IMR-90 (cell line): ENCODE measurements at regions of chr16 and their contacts with region 1.

Region 1: GRCh38 chr16:59090541-59090940 is 356.4 kb upstream of the GOT2 start:
- DNase-seq: no peak
- ATAC-seq: no peak
- H3K4me3 ChIP-seq: no peak overlapping the region
- H3K27ac ChIP-seq: no peak overlapping the region
- H3K4me1 ChIP-seq: no peaks in the 10 kb centered on the region
- H3K27me3 ChIP-seq: no peaks in the 10 kb centered on the region
- CTCF ChIP-seq: no peak
- POLR2A ChIP-seq: no peak
- RAD21 ChIP-seq: no peak

Region 2: GRCh38 chr16:58160855-58161254 is 929.7 kb before region 1 on chr16:
- CTCF ChIA-PET with region 1: no interaction called
- POLR2A ChIA-PET with region 1: interaction called, 21 read pairs
- dilution Hi-C with region 1: no loop called
- in situ Hi-C with region 1: no loop called
- intact Hi-C with region 1: no loop called
- DNase-seq: no peak
- ATAC-seq: no peak
- H3K4me3 ChIP-seq: no peak overlapping the region
- H3K27ac ChIP-seq: no peak overlapping the region
- H3K4me1 ChIP-seq: no peaks in the 10 kb centered on the region
- H3K27me3 ChIP-seq: no peaks in the 10 kb centered on the region
- CTCF ChIP-seq: no peak
- POLR2A ChIP-seq: no peak
- RAD21 ChIP-seq: no peak

Region 3: GRCh38 chr16:59013930-59014329 is 76.6 kb before region 1 on chr16:
- CTCF ChIA-PET with region 1: no interaction called
- POLR2A ChIA-PET with region 1: no interaction called
- dilution Hi-C with region 1: no loop called
- in situ Hi-C with region 1: no loop called
- intact Hi-C with region 1: no loop called
- DNase-seq: no peak
- ATAC-seq: no peak
- H3K4me3 ChIP-seq: no peak overlapping the region
- H3K27ac ChIP-seq: no peak overlapping the region
- H3K4me1 ChIP-seq: no peaks in the 10 kb centered on the region
- H3K27me3 ChIP-seq: no peaks in the 10 kb centered on the region
- CTCF ChIP-seq: no peak
- POLR2A ChIP-seq: no peak
- RAD21 ChIP-seq: no peak